GM18951 (cell line): ENCODE measurements at regions of chrX and their contacts with region 1.

Region 1: DNA sequence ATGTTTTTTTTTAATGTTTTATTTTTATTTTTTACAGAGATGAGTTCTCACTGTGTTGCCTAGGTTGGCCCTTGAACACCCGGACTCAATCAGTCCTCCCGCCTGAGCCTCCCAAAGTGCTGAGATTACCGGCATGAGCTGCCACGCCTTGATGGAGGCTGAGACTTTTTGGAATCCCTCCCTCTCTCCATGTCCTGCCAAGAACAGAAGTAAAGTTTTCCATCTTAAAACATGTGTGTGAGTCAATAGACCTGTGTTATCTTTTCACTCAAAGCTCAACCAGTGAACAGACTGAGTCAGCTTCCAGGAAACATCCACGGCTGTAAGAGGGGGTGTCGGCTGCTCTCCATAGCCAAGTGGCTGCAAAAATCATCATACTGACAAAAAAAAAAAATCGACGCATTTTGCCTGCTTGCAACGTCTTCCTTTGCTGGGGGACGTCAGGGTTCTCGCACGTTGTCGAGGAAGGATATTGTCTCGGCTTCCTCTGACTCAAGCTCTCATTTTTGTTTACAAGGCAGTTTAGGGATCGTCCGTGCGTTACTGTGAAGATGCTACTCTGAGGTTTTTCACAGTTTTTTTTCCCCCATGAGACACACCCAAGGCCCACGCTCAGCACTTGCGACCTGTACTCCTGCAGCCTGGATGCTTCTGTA is 10.0 kb upstream of the ASMTL start:
- POLR2A ChIP-seq: no peak

Region 2: DNA sequence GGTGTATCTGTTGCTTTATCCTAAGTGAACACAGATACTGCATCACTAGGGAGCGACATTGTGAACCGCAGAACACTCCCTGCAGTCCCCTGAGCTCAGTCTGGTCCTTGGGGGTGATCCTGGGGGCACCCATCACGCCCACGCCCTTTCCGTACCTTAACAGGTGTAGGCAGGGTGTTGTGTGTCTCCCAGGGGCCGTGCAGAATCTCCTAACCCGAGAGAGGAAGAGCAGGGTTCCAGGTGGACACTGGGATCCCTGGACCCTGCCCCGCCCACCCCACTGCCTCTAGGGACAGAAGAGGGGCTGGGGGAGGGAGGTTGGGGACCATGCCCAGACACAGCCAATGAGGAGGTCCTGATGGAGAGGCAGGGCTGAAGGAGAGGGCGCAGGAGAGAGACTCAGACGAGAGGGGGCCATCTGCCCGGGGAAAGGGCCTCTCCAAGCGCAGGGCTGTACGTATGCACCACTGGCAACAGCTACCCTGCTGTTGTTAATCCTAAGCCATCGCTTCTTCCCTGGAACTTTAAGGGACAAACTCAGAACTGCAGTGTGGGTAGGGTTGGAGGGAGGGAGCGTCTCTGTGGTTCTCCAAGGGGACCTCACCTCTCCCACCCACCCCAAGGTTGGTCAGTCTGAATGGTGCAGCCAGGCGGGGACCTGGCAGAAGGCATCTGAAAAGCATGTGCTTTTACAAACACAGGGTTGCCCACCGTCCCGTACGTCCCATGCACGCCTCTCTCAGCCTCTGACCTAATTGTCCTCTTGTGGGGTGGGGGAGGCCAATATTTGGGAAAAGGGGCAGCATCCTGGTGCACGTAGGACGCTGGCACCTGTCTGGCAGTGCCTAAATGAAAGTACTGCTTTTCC is 71.8 kb after region 1 on chrX:
- in situ Hi-C with region 1: loop called (anchors 5 kb)
- POLR2A ChIP-seq: peak; percentile 52